Panc1 (cell line): ENCODE measurements at regions of chr15 and their contacts with region 1.

Region 1: DNA sequence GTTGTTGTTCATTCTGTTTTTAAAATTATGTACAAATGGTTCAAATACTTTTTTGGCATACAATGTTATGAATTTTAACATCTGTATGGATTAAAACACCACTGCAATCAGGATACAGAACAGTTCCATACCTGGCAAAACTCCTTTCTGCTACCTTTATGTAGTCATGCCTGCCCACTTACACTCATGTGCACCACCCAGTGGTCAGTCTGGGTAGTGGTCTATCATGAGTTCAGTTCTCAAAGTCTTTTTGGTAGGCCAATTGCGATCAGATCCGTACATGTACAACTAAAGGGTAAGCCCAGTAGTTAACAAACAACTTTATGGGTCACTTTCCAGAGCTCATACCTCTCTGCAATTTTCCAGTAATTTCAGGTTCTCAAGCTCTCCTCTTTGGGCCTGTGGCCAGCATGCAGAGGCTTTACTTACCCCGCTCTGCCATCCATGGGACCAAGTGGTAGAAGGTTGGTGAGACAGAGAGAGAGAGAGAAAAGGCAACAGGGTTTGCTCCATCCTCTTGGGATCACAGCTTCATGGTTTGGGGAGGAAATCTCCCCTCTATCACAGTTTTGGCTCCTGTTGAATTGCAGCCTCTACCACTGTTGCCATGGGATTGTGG is 63.9 kb upstream of the FAM98B start:
- DNase-seq: peak; percentile 55
- ATAC-seq: peak; percentile 88
- H3K4me3 ChIP-seq: no peak overlapping the region
- H3K27ac ChIP-seq: no peak overlapping the region
- H3K4me1 ChIP-seq: no peaks in the 10 kb centered on the region
- H3K27me3 ChIP-seq: peaks cover 5% of the 10 kb centered on the region
- CTCF ChIP-seq: peak; percentile 87

Region 2: GRCh38 chr15:37995461-37996347 is 394.3 kb before region 1 on chr15:
- CTCF ChIA-PET with region 1: no interaction called
- POLR2A ChIA-PET with region 1: no interaction called
- in situ Hi-C with region 1: no loop called
- intact Hi-C with region 1: loop called (anchors 1 kb)
- DNase-seq: no peak
- ATAC-seq: peak; percentile 78
- H3K4me3 ChIP-seq: no peak overlapping the region
- H3K27ac ChIP-seq: no peak overlapping the region
- H3K4me1 ChIP-seq: no peaks in the 10 kb centered on the region
- H3K27me3 ChIP-seq: no peaks in the 10 kb centered on the region
- CTCF ChIP-seq: peak; percentile 69

Region 3: GRCh38 chr15:38168467-38169070 is 221.5 kb before region 1 on chr15:
- CTCF ChIA-PET with region 1: no interaction called
- POLR2A ChIA-PET with region 1: no interaction called
- in situ Hi-C with region 1: no loop called
- intact Hi-C with region 1: loop called (anchors 5 kb)
- DNase-seq: no peak
- ATAC-seq: no peak
- H3K4me3 ChIP-seq: no peak overlapping the region
- H3K27ac ChIP-seq: no peak overlapping the region
- H3K4me1 ChIP-seq: no peaks in the 10 kb centered on the region
- H3K27me3 ChIP-seq: peaks cover 3% of the 10 kb centered on the region
- CTCF ChIP-seq: no peak

Region 4: DNA sequence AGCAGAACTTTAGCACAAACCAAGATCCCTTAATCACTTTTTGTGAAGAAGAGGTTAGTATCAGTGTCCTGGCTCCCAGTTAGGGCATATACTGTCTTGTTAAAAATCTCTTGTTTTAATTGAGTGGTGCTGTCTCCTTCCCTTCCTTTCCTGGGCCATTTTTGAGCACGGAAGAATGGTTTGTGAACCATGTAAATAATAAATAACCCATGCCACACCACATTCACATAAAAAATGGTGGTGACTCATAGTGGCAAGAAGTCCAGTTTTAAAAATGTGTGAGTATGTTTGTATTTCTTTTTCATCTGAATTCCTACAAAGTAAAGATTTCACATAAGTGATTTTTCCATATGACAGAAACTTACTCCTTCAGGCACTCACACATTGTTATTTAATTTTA is 196.5 kb before region 1 on chr15:
- CTCF ChIA-PET with region 1: no interaction called
- POLR2A ChIA-PET with region 1: no interaction called
- in situ Hi-C with region 1: no loop called
- intact Hi-C with region 1: no loop called
- DNase-seq: no peak
- ATAC-seq: no peak
- H3K4me3 ChIP-seq: no peak overlapping the region
- H3K27ac ChIP-seq: no peak overlapping the region
- H3K4me1 ChIP-seq: no peaks in the 10 kb centered on the region
- H3K27me3 ChIP-seq: no peaks in the 10 kb centered on the region; the same call in 1 of the 2 replicates
- CTCF ChIP-seq: no peak

Region 5: DNA sequence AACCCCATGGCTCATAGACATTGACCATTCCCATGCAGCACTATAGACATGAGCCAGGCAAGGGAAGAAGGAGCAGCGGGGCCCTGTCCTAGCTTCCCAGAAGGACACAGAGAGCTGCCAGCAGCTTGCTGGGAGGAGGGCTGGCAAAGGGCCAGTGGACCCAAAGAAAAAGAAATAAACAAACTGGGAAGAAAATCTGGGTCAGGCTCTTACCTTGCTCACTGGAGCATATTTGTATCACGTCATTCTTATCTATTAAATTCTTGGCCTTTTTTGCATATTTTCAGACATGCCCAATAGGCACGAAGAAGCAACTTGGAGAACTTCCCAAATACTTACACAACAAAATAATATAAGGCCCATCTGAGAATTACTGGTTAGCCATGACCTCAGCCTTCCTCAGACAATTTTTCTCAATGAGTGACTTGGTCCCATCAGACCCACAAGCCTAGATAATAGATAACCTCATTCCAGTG is 146.2 kb after region 1 on chr15:
- CTCF ChIA-PET with region 1: no interaction called
- POLR2A ChIA-PET with region 1: no interaction called
- in situ Hi-C with region 1: no loop called
- intact Hi-C with region 1: no loop called
- DNase-seq: no peak
- ATAC-seq: no peak
- H3K4me3 ChIP-seq: no peak overlapping the region
- H3K27ac ChIP-seq: no peak overlapping the region
- H3K4me1 ChIP-seq: no peaks in the 10 kb centered on the region
- H3K27me3 ChIP-seq: no peaks in the 10 kb centered on the region; the same call in 1 of the 2 replicates
- CTCF ChIP-seq: no peak

Region 6: GRCh38 chr15:39040861-39041260 is 650.8 kb after region 1 on chr15:
- CTCF ChIA-PET with region 1: no interaction called
- POLR2A ChIA-PET with region 1: no interaction called
- in situ Hi-C with region 1: no loop called
- intact Hi-C with region 1: no loop called
- DNase-seq: no peak
- ATAC-seq: no peak
- H3K4me3 ChIP-seq: no peak overlapping the region
- H3K27ac ChIP-seq: no peak overlapping the region
- H3K4me1 ChIP-seq: no peaks in the 10 kb centered on the region
- H3K27me3 ChIP-seq: no peaks in the 10 kb centered on the region
- CTCF ChIP-seq: no peak